ENCODE measurements at regions of chr7 and their contacts with region 1.

Region 1: DNA sequence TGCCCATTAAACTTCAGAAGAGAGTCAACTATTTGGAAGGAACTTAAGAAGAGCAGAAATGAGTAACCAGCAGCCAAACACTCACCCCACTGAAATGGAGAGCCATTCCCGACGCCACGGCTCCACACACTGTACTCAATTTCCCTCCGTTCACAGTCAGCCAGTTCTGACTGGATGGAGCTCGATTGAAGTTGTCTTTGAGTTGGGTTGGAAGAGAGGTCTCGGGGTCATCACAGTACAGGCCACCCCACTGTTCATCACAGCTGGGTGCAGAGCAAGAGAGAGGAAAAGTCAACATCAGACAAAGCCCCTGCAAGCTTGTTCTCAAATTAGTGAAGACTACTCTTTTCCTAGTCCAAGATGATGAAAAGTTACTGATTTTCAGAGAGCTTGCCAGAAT is 75.9 kb upstream of the SLC26A5 start:
- DNase-seq: no peak
- ATAC-seq: no peak
- H3K4me3 ChIP-seq: no peak overlapping the region
- H3K27ac ChIP-seq: no peak overlapping the region
- H3K4me1 ChIP-seq: no peaks in the 10 kb centered on the region
- H3K27me3 ChIP-seq: peaks cover 15% of the 10 kb centered on the region
- CTCF ChIP-seq: no peak

Region 2: GRCh38 chr7:103009466-103010185 is 512.3 kb before region 1 on chr7:
- CTCF ChIA-PET with region 1: no interaction called
- POLR2A ChIA-PET with region 1: no interaction called
- in situ Hi-C with region 1: no loop called
- intact Hi-C with region 1: no loop called
- DNase-seq: no peak
- ATAC-seq: peak; percentile 58
- H3K4me3 ChIP-seq: no peak overlapping the region
- H3K27ac ChIP-seq: no peak overlapping the region
- H3K4me1 ChIP-seq: no peaks in the 10 kb centered on the region
- H3K27me3 ChIP-seq: no peaks in the 10 kb centered on the region
- CTCF ChIP-seq: no peak

Region 3: GRCh38 chr7:103466814-103467213 is 55.1 kb before region 1 on chr7:
- CTCF ChIA-PET with region 1: no interaction called
- POLR2A ChIA-PET with region 1: no interaction called
- in situ Hi-C with region 1: no loop called
- intact Hi-C with region 1: no loop called
- DNase-seq: no peak
- ATAC-seq: no peak
- H3K4me3 ChIP-seq: no peak overlapping the region
- H3K27ac ChIP-seq: no peak overlapping the region
- H3K4me1 ChIP-seq: no peaks in the 10 kb centered on the region
- H3K27me3 ChIP-seq: peaks cover 10% of the 10 kb centered on the region; the same call in 1 of the 2 replicates
- CTCF ChIP-seq: no peak

Region 4: GRCh38 chr7:103752997-103753396 is 231.1 kb after region 1 on chr7:
- CTCF ChIA-PET with region 1: no interaction called
- POLR2A ChIA-PET with region 1: no interaction called
- in situ Hi-C with region 1: no loop called
- intact Hi-C with region 1: no loop called
- DNase-seq: no peak
- ATAC-seq: no peak
- H3K4me3 ChIP-seq: no peak overlapping the region
- H3K27ac ChIP-seq: no peak overlapping the region
- H3K4me1 ChIP-seq: no peaks in the 10 kb centered on the region
- H3K27me3 ChIP-seq: no peaks in the 10 kb centered on the region
- CTCF ChIP-seq: no peak

Region 5: DNA sequence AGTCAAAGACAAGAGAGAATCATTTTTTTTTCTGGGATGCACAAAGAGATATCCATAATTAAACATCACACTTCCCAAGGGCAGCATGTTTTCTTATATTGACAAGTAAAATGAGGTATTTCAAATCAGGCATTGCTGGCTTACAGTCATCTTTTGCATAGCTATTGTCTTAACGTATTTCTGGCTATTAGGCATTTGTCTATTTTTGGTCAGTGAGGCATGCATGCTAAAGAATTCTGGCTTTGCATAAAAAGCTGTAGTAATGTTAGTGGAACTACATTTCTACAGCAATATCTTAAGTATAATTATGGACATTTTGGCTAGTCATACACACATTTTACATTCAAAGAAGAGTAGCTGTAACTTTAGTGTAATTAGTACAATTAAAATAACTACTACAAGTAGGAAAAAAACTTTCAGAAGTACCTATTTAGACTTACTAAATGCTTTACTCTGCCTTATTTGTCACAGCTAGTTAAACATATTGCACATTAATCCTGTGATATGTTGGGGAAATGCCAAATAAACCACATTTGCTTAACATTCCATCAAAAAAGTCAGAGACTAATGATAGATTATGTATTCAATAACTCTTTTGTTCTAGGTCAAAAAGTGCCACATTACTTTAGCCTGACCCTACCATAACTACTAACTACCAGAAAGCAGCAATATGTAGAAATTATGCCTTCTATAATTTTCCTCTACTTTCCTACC is 391.1 kb after region 1 on chr7:
- CTCF ChIA-PET with region 1: interaction called, 11 read pairs
- POLR2A ChIA-PET with region 1: no interaction called
- in situ Hi-C with region 1: no loop called
- intact Hi-C with region 1: no loop called
- DNase-seq: no peak
- ATAC-seq: no peak
- H3K4me3 ChIP-seq: no peak overlapping the region
- H3K27ac ChIP-seq: no peak overlapping the region
- H3K4me1 ChIP-seq: no peaks in the 10 kb centered on the region
- H3K27me3 ChIP-seq: no peaks in the 10 kb centered on the region
- CTCF ChIP-seq: no peak

Region 6: GRCh38 chr7:105448181-105448580 is 1926.2 kb after region 1 on chr7:
- CTCF ChIA-PET with region 1: no interaction called
- POLR2A ChIA-PET with region 1: no interaction called
- in situ Hi-C with region 1: no loop called
- intact Hi-C with region 1: no loop called
- DNase-seq: no peak
- ATAC-seq: no peak
- H3K4me3 ChIP-seq: no peak overlapping the region
- H3K27ac ChIP-seq: no peak overlapping the region
- H3K4me1 ChIP-seq: no peaks in the 10 kb centered on the region
- H3K27me3 ChIP-seq: no peaks in the 10 kb centered on the region
- CTCF ChIP-seq: no peak